Endothelial cell of umbilical vein (primary cell): ENCODE measurements at regions of chr1 and their contacts with region 1.

Region 1: DNA sequence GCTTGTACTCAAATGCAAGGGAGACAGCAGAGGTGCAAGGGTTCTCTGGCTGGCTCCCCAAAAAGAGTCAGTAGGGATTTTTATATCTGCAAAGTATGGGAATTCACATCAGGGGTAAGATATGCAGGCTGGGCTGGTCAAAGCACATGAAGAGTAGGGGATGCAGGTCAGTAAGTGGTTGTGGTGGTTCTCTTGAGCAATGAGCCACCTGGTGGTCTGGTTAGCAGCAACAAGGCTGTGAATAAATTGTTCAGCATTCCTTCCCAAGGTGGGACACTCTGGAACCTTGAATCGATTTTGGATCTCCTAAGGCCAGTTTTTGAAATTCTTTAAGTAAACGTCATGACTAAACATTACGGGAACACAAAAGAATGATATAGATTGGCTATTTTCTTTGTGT is 563.0 kb upstream of the NEGR1 start:
- DNase-seq: peak; percentile 31
- H3K4me3 ChIP-seq: no peak overlapping the region
- H3K27ac ChIP-seq: no peak overlapping the region
- H3K4me1 ChIP-seq: no peaks in the 10 kb centered on the region
- H3K27me3 ChIP-seq: no peaks in the 10 kb centered on the region
- CTCF ChIP-seq: peak; percentile 21 to 39
- POLR2A ChIP-seq: no peak

Region 2: DNA sequence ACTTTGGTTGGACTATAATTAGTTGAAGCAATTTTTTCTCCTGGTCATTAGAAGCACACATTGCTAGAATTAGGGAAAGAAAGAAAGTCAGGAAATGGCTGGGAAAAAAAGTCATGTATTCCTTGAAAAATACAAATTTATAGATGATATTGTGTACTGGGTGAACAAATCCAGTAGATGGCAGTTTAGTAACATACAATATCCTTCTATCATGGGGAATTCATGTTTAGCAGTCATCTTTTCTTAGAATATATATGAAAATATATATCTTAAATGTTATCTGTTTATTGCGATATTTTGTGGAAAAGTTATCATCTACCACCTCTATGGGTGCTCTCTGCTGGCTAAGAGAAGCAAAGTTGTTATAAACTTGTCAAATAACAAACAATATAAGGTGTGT is 1751.4 kb before region 1 on chr1:
- CTCF ChIA-PET with region 1: no interaction called
- POLR2A ChIA-PET with region 1: no interaction called
- dilution Hi-C with region 1: no loop called
- intact Hi-C with region 1: loop called (anchors 5 kb)
- DNase-seq: peak; percentile 31
- H3K4me3 ChIP-seq: no peak overlapping the region
- H3K27ac ChIP-seq: no peak overlapping the region
- H3K4me1 ChIP-seq: no peaks in the 10 kb centered on the region
- H3K27me3 ChIP-seq: peaks cover 0 to 2% of the 10 kb centered on the region in 2 experiments
- CTCF ChIP-seq: peak in 1 of 2 donors; percentile 9
- POLR2A ChIP-seq: no peak

Region 3: DNA sequence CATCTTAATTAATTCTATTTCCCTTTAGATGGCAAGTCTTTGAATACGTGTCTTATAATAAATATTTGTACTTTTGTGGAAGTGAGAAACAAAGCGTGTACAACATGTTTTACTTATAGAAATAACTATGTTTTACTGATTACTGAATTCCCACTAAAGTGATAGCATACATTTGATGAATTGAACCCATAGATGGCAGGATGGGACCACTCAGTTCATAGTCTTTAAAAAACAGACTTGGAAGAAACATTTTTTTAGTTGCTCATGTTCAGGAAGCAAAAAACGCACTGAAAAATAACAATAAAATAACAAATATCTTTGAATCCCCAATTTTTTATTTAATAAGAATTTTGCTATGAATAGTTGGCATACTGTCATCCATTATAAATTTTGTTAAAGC is 1257.4 kb before region 1 on chr1:
- CTCF ChIA-PET with region 1: no interaction called
- POLR2A ChIA-PET with region 1: no interaction called
- dilution Hi-C with region 1: no loop called
- intact Hi-C with region 1: loop called (anchors 2 kb)
- DNase-seq: peak; percentile 60
- H3K4me3 ChIP-seq: no peak overlapping the region
- H3K27ac ChIP-seq: no peak overlapping the region
- H3K4me1 ChIP-seq: no peaks in the 10 kb centered on the region
- H3K27me3 ChIP-seq: no peaks in the 10 kb centered on the region
- CTCF ChIP-seq: no peak
- POLR2A ChIP-seq: no peak

Region 4: GRCh38 chr1:72186733-72187307 is 658.5 kb before region 1 on chr1:
- CTCF ChIA-PET with region 1: no interaction called
- POLR2A ChIA-PET with region 1: no interaction called
- dilution Hi-C with region 1: no loop called
- intact Hi-C with region 1: loop called (anchors 2 kb)
- DNase-seq: peak; percentile 51
- H3K4me3 ChIP-seq: no peak overlapping the region
- H3K27ac ChIP-seq: no peak overlapping the region
- H3K4me1 ChIP-seq: no peaks in the 10 kb centered on the region
- H3K27me3 ChIP-seq: no peaks in the 10 kb centered on the region
- CTCF ChIP-seq: peak; percentile 25 to 48
- POLR2A ChIP-seq: no peak